Activated CD8-positive, alpha-beta memory T cell treated with anti-CD3 and anti-CD28 coated beads, Interleukin-2, amount 10 ng/mL, durations not matched to agents 7 days and 5 days (primary cell): ENCODE measurements at regions of chr2 and their contacts with region 1.

Region 1: DNA sequence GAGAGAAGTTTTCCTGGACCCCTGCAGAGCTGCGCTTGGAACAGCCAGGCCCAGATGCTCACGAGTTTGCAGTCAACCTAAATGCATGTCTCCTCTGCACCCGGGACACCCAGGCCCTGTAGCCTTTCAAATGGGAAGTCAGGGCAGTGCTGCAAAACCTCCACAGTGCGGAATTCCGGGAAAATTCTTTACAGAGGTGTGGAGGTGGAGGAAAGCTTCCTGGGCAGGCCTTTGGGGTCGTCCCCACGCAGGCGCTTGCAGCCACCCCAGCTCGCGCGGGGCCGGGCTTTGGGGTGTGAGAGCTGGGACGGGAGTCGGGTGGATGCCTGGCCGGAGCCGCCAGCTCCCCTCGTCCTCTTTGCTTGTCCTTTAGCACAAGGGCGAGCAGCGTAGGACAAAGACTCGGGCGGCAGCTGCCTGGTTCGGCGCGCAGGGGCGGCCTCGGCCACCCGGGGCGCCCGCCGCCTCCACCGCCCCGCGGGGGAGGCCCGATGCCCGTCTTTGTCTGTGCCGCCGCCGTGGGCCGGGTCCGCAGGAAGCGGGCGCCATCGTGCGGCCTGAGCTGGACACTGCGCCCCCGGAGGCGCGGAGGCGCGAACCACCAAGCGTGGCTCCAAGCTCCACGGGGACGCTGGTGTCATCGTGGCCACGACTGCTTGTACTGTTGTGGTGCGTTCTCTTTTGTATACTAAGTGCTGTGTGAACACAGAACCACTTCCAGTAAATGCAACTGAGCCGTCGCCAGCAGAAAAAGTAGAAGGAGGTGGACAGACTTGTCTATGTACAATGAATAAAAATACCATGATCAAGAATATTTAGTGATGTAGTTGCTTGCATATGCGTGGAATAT is 28.2 kb upstream of the BCL11A start:
- DNase-seq: peak; percentile 68
- ATAC-seq: peak; percentile 90
- H3K4me3 Mint-ChIP-seq: no peak overlapping the region
- H3K27ac Mint-ChIP-seq: no peak overlapping the region
- H3K4me1 Mint-ChIP-seq: peaks cover 4% of the 10 kb centered on the region
- H3K27me3 Mint-ChIP-seq: peaks cover 55% of the 10 kb centered on the region

Region 2: GRCh38 chr2:60439219-60439974 is 142.3 kb before region 1 on chr2:
- CTCF ChIA-PET with region 1: no interaction called
- DNase-seq: no peak
- ATAC-seq: no peak
- H3K4me3 Mint-ChIP-seq: no peak overlapping the region
- H3K27ac Mint-ChIP-seq: no peak overlapping the region
- H3K4me1 Mint-ChIP-seq: no peaks in the 10 kb centered on the region
- H3K27me3 Mint-ChIP-seq: no peaks in the 10 kb centered on the region

Region 3: GRCh38 chr2:60498816-60499429 is 82.7 kb before region 1 on chr2:
- CTCF ChIA-PET with region 1: no interaction called
- DNase-seq: no peak
- ATAC-seq: no peak
- H3K4me3 Mint-ChIP-seq: no peak overlapping the region
- H3K27ac Mint-ChIP-seq: no peak overlapping the region
- H3K4me1 Mint-ChIP-seq: peaks cover 16% of the 10 kb centered on the region
- H3K27me3 Mint-ChIP-seq: peaks cover 15% of the 10 kb centered on the region

Region 4: DNA sequence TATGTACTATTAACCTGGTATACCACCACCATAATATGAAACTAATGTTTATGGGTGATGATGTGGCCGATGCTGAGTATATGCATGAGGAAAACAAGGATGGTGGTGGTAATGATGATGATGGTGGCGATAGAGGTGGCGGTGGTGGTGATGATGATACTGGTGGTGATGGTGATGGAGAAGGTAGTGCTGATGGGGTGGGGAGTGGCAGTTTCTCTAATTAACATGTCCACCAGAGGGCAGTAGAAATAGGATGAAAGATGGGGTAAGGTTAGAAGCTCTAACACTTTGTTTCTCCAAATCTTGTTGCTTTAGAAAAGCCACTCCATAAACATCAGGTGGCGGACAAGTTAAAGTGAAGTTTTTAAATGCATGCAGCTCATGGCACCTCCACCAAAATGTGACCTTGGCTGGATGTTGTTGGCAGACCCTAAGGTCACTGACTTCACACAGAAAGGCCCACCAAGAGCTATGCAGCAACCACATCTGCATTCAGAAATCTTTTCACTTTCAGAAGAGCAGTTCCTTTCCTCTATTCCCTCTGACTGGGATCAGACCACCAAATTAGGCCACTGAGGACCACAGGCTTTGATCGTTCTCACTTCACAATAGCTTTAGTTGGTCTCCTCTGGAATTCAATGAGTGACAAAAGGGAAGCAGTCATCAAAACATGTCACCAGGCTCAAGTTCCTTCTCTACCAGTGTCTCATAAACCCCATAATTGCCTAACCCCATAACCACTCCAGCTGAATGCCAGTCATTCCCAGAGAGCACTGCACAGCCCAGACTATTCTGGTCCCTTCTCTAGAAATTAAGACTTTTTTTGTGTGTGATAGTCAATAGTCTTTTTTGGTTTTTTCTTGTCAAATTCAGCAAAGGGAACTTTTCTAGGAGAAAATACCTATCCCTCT is 20.7 kb before region 1 on chr2:
- CTCF ChIA-PET with region 1: interaction called, 62 read pairs
- DNase-seq: no peak
- ATAC-seq: peak; percentile 70
- H3K4me3 Mint-ChIP-seq: no peak overlapping the region
- H3K27ac Mint-ChIP-seq: no peak overlapping the region
- H3K4me1 Mint-ChIP-seq: peaks cover 7% of the 10 kb centered on the region
- H3K27me3 Mint-ChIP-seq: peaks cover 73% of the 10 kb centered on the region

Region 5: DNA sequence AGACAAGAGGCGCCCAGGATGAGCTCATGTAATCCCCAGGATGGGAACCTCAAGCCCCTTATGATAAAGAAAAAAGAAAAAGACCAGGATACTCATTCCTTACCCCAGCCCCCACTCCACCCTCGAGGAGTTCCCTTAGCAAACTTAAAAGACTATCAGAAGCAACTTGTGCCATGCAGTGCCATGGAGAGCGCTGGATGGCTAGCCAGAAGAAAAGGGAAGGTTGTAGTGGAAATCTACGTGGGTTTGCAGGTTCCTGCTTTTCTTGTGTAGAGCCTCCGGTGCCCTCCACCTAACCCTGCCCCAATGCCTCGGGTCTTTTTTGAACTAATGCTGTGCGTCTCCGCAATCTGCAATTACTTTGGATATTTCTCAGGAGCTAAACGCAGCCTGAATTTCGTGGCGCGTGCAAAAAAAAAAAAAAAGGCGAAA is 12.0 kb before region 1 on chr2:
- CTCF ChIA-PET with region 1: interaction called, 34 read pairs
- DNase-seq: no peak
- ATAC-seq: no peak
- H3K4me3 Mint-ChIP-seq: no peak overlapping the region
- H3K27ac Mint-ChIP-seq: no peak overlapping the region
- H3K4me1 Mint-ChIP-seq: peaks cover 4% of the 10 kb centered on the region
- H3K27me3 Mint-ChIP-seq: peaks cover 40% of the 10 kb centered on the region